ENCODE measurements at regions of chr5 and their contacts with region 1.

Region 1: DNA sequence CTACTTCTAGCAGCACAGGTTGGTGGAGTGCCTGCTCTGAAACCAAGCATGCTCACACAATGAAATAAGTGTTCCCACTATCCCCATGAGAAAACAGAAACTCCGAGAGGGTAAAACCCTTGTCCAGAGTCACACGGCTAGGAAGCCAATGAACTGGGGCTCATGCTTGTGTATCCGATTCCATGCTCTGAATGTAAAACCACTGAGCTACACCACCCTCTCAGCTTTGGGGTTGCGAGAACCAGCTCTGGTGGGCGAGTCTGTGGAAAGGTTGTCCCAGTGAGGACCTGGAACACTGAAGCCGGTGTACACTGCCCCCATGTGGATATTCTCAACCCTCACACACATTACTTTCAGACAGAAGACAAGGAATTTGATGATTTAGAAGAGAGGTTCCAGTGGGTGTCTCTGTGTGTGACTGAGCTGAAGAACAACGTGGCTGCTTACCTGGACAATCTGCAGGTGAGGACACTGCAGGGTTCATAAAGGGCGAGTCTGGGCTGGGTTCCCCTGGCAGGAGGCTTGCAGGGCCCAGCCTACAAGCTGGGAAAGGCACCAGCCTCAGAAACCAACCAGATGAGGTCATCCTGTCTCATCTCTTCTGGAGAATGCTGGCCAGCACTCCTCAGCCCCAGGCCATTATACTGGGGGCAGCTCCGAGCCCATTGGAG is 37.4 kb downstream of the ARHGEF37 start:
- DNase-seq: peak; percentile 78
- H3K4me3 ChIP-seq: no peak overlapping the region
- H3K27ac ChIP-seq: peak overlapping the region; percentile 44
- H3K4me1 ChIP-seq: peaks cover 47% of the 10 kb centered on the region
- CTCF ChIP-seq: peak; percentile 94

Region 2: DNA sequence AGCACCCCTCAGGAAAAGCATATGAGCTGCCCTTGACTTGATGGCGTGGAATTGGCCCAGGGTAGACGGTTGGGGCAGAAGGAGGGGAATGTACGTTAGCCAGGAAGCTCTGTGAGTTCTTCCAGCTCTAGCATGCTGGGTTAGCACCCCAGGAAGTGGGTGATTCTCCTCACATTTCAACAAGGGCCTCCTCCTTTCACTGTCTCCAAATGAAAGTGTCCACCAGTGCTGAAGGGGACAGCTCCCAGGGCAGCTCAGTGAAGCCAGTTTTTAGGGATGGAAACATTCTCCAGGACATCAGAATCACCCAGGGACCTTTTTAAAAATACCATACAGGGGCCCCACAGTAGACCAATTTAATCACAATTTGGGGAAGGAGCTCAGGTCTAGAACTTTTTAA is 364.2 kb before region 1 on chr5:
- CTCF ChIA-PET with region 1: no interaction called
- POLR2A ChIA-PET with region 1: no interaction called
- intact Hi-C with region 1: no loop called
- DNase-seq: no peak
- H3K4me3 ChIP-seq: no peak overlapping the region
- H3K27ac ChIP-seq: no peak overlapping the region
- H3K4me1 ChIP-seq: no peaks in the 10 kb centered on the region
- CTCF ChIP-seq: no peak

Region 3: DNA sequence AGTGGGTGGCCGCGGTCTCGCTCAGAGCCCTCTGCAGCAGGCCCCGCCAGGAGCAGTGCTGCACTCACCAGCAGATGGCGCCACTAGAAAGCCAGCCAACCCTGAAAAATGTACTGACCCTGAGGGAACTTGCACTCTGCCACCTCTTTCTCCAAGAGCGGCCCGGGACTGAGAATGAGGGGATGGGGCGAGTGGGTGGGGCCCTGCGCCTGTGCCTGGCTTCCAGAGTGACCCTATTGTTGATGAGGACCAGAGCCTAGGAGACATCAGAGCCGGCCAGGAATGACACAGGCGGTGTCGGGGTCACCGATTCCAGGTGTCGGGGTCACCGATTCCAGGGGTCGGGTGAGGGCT is 236.8 kb before region 1 on chr5:
- CTCF ChIA-PET with region 1: interaction called, 5 read pairs
- POLR2A ChIA-PET with region 1: no interaction called
- intact Hi-C with region 1: loop called (anchors 1 kb)
- DNase-seq: peak; percentile 63
- H3K4me3 ChIP-seq: no peak overlapping the region
- H3K27ac ChIP-seq: no peak overlapping the region
- H3K4me1 ChIP-seq: no peaks in the 10 kb centered on the region
- CTCF ChIP-seq: peak; percentile 90

Region 4: DNA sequence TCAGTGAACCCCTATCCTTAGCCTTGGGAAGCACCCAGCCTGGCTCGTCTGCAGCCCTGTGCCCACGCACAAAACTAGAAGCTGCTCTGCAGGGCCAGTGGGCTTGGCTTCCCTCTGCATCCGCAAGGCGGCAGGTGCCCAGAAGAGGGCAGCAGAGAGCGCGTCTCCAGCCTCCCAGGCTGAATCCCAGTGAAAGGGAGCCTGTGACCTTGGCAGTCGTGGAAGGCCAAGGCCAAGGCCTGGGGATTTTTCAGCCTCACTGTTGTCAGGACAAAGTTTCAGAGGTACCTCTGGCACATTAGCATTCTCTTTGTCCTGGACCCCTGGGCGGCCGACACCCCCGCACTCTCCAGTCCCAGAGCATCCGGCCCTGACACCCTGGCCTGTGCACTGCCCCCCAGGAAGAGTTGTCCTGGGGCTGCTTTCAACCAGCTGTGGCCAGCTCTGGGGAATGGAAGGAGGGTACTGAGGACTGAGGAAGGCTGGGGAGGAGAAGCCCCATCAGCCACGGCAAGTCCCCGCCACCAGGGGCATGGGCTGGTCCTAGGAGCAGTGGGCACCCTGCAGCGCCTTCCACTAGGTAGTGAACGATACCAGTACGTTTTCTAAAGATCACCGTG is 176.0 kb before region 1 on chr5:
- CTCF ChIA-PET with region 1: interaction called, 4 read pairs
- POLR2A ChIA-PET with region 1: interaction called, 4 read pairs
- intact Hi-C with region 1: loop called (anchors 1 kb)
- DNase-seq: peak; percentile 63
- H3K4me3 ChIP-seq: no peak overlapping the region
- H3K27ac ChIP-seq: no peak overlapping the region
- H3K4me1 ChIP-seq: no peaks in the 10 kb centered on the region
- CTCF ChIP-seq: peak; percentile 88

Region 5: GRCh38 chr5:149551200-149552037 is 67.3 kb before region 1 on chr5 and contains the start of gene CSNK1A1:
- CTCF ChIA-PET with region 1: no interaction called
- POLR2A ChIA-PET with region 1: interaction called, 5 read pairs
- intact Hi-C with region 1: loop called (anchors 1 kb)
- DNase-seq: peak; percentile 99
- H3K4me3 ChIP-seq: peak within 1 kb of the TSS; percentile 98
- H3K27ac ChIP-seq: peak within 1 kb of the TSS; percentile 83
- H3K4me1 ChIP-seq: peaks cover 32% of the 10 kb centered on the region
- CTCF ChIP-seq: peak; percentile 92
- total RNA-seq, gene CSNK1A1: 161 and 176 TPM in 2 replicates

Region 6: GRCh38 chr5:149605998-149606724 is 12.6 kb before region 1 on chr5:
- CTCF ChIA-PET with region 1: interaction called, 8 read pairs
- POLR2A ChIA-PET with region 1: interaction called, 27 read pairs
- intact Hi-C with region 1: no loop called
- DNase-seq: peak; percentile 81
- H3K4me3 ChIP-seq: peak overlapping the region; percentile 29
- H3K27ac ChIP-seq: peak overlapping the region; percentile 76
- H3K4me1 ChIP-seq: peaks cover 44% of the 10 kb centered on the region
- CTCF ChIP-seq: no peak

Region 7: DNA sequence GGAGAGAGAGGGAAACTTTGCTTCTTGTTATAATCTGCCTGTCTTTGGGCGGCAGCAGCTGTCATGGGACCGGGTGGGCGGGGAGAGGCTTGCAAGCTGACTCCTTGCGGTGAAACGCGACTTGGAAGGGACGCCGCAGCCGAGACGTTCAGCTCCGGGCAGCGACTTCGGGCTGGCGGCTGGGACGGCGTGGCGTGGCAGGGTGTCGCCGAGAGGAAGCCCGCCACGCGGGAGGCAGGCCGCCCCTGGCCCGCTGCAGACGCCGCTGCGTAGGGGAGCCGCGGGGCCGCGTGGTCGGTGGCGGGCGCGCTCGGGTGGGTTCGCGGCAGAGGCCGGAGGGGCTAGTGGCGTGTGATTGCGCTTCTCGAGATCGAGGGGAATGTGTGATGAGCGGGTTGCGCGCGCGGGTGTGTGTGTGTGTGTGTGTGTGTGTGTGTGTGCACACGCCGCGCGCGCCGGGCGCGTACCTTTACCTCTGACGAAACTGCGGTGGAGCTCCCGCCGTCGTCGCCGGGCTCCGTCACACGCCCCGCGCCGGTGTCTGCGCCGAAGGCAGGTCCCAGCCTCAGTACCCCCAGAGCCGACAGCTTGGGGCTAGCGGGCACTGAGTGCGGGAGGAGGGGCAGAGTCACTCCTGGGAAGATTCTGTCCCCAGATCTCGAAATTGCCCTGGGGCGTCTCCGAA is 113.1 kb after region 1 on chr5:
- CTCF ChIA-PET with region 1: no interaction called
- POLR2A ChIA-PET with region 1: no interaction called
- intact Hi-C with region 1: no loop called
- DNase-seq: peak; percentile 89
- H3K4me3 ChIP-seq: peak overlapping the region; percentile 90
- H3K27ac ChIP-seq: peak overlapping the region; percentile 66
- H3K4me1 ChIP-seq: peaks cover 11% of the 10 kb centered on the region
- CTCF ChIP-seq: no peak

Region 8: DNA sequence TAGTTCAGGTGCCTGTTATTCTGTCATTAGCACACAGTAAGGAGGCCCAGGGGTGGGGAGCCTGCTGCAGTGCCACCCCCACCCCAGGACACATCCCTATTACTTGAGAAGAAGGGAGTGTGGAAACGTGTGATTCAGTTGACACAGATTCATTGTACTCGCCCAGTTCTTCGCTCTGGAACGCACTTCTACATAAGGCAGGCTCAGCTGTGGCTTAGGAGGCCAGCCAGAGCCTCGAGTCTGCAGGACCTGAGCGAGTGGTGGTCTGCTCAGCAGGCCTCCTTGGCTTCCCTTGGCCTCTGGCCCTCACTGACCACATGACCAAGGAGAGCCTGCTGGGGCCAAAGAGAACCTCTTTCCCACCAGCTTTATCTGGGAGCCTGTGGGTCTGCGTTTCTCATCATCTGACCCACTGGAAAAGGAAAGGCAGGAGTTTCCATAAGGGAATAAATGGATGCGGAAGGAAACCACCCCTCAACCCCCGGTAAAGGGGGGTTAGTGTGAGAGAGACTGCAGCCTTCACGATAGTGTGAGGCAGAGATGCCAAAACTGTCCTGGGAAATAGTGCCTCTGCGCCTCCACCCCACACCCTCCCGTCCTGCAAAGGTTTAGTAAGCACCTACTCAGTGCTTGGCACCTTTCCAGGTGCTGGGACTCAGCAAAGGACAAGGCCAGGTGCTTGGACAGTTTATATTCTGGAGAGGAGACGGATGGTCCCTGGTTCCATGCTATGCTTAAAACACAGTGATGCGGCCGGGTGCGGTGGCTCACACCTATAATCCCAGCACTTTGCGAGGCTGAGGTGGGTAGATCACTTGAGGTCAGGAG is 185.1 kb after region 1 on chr5:
- CTCF ChIA-PET with region 1: no interaction called
- POLR2A ChIA-PET with region 1: no interaction called
- intact Hi-C with region 1: no loop called
- DNase-seq: no peak
- H3K4me3 ChIP-seq: no peak overlapping the region
- H3K27ac ChIP-seq: no peak overlapping the region
- H3K4me1 ChIP-seq: no peaks in the 10 kb centered on the region
- CTCF ChIP-seq: no peak

Measured in OCI-LY7 (cell line).